Activated B cell treated with CpG ODN at 0.5 μM for 24 hours (primary cell): ENCODE measurements at regions of chr7 and their contacts with region 1.

Region 1: GRCh38 chr7:130982160-130982638 is 248.2 kb upstream of the KLF14 start:
- DNase-seq: no peak
- ATAC-seq: peak; percentile 94
- H3K4me3 Mint-ChIP-seq: no peak overlapping the region
- H3K27ac Mint-ChIP-seq: no peak overlapping the region
- H3K4me1 Mint-ChIP-seq: peaks cover 21% of the 10 kb centered on the region
- H3K27me3 Mint-ChIP-seq: no peaks in the 10 kb centered on the region
- CTCF ChIP-seq: no peak

Region 2: GRCh38 chr7:130912862-130913631 is 69.2 kb before region 1 on chr7:
- CTCF ChIA-PET with region 1: interaction called, 10 read pairs
- POLR2A ChIA-PET with region 1: interaction called, 3 read pairs
- intact Hi-C with region 1: loop called (anchors 2 kb)
- DNase-seq: peak; percentile 54
- ATAC-seq: peak; percentile 91
- H3K4me3 Mint-ChIP-seq: peak overlapping the region; percentile 87
- H3K27ac Mint-ChIP-seq: peak overlapping the region; percentile 90
- H3K4me1 Mint-ChIP-seq: peaks cover 86% of the 10 kb centered on the region
- H3K27me3 Mint-ChIP-seq: no peaks in the 10 kb centered on the region
- CTCF ChIP-seq: no peak

Region 3: GRCh38 chr7:130966246-130967009 is 15.8 kb before region 1 on chr7:
- CTCF ChIA-PET with region 1: interaction called, 20 read pairs
- POLR2A ChIA-PET with region 1: interaction called, 8 read pairs
- intact Hi-C with region 1: loop called (anchors 1 kb)
- DNase-seq: no peak
- ATAC-seq: no peak
- H3K4me3 Mint-ChIP-seq: no peak overlapping the region
- H3K27ac Mint-ChIP-seq: peak overlapping the region; percentile 74
- H3K4me1 Mint-ChIP-seq: peaks cover 65% of the 10 kb centered on the region
- H3K27me3 Mint-ChIP-seq: no peaks in the 10 kb centered on the region
- CTCF ChIP-seq: no peak

Region 4: DNA sequence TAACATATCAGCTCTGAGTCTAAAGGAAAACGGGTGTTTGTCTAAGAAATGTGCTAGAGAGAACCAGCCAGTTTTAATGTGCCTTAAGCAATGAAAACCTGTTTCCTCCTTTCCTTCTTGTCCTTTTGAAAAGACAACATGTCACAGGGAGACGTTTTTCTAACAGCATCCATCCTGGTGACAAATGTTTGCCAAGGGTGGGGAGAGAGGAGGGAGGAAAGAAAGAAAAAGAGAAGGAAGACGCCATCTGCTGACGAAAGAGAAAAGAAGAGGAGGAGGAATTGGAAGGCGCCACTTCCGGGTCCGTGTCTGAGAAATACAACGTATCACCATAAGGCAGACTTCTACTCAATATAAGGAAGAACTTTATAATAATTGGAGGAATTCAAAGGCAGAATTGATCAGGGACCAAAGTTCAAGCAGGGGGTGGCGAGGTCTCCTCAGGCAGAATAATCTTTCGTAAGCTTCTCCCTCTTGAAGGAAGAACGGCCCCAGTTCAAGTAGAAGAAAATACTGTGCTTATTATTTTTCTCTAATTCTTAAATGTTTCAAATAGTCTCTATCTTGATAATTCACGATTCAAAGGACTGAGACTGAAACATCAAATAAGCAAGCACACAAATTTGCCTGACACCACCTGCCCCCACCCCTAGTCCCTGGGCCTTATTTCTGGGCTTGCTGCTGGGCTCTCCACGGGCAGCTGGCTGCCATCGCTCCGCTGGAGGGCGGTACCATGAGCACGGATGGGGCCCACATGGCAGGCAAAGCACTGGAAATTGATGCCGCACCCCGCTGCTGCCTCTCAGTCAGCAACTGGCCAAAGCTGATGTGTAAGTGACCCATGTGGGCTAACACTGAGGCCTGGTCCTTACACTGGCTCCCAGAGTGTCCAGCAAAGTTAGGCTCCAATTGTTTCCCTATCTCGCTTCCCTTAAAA is 25.5 kb after region 1 on chr7:
- CTCF ChIA-PET with region 1: interaction called, 27 read pairs
- POLR2A ChIA-PET with region 1: interaction called, 10 read pairs
- intact Hi-C with region 1: loop called (anchors 1 kb)
- DNase-seq: no peak
- ATAC-seq: peak; percentile 64
- H3K4me3 Mint-ChIP-seq: peak overlapping the region; percentile 46
- H3K27ac Mint-ChIP-seq: peak overlapping the region; percentile 89
- H3K4me1 Mint-ChIP-seq: peaks cover 88% of the 10 kb centered on the region
- H3K27me3 Mint-ChIP-seq: no peaks in the 10 kb centered on the region
- CTCF ChIP-seq: no peak

Region 5: DNA sequence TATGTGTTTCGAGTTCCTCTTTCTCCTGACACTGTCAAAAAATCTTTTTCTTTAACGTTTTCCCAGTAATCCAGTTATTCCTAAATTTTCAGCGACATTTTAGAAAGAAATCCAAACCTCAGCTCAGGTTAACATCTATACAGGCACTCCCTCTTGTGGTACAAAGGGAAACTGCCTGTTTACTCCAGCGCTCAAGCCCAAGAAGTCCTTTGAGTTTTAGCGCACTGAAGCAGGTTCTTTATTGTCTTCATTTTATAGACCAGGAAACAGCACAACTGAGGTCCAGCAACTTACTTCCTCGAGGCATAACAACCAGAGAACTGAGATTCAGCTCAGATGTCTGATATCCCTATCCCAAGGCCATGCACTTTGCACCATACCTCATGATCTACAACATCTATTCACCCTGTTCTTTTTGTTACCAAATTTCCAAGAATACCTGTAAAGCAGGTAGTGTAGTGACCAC is 58.3 kb after region 1 on chr7:
- CTCF ChIA-PET with region 1: interaction called, 128 read pairs
- POLR2A ChIA-PET with region 1: interaction called, 11 read pairs
- intact Hi-C with region 1: loop called (anchors 1 kb)
- DNase-seq: no peak
- ATAC-seq: peak; percentile 75
- H3K4me3 Mint-ChIP-seq: peak overlapping the region; percentile 60
- H3K27ac Mint-ChIP-seq: peak overlapping the region; percentile 81
- H3K4me1 Mint-ChIP-seq: peaks cover 56% of the 10 kb centered on the region
- H3K27me3 Mint-ChIP-seq: no peaks in the 10 kb centered on the region
- CTCF ChIP-seq: peak; percentile 61

Region 6: DNA sequence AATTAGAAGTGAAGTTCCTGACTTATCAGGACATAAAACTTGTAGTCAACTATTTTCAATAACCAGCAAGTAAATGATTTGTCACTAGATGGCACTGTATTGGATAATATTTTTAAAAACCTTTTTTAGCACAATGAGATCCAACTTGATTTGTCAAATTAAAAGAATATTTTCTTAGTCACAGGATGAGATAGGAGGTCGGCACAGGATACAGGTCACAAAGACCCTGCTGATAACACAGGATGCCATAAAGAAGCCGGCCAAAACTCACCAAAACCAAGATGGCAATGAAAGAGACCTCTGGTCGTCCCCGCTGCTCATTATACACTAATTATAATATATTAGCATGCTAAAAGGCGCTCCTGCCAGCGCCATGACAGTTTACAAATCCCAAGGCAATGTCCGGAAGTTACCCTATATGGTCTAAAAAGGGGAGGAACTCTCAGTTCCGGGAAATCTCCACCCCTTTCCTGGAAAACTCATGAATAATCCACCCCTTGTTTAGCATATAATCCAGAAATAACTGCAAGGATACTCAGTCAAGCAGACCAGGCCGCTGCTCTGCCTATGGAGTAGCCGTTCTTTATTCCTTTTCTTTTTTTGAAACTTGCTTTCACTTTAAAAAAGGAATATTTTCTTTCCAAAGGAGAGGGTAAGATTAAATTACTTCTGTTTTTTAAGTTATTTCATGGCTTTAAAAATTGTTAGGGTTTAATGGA is 89.7 kb after region 1 on chr7:
- CTCF ChIA-PET with region 1: interaction called, 11 read pairs
- POLR2A ChIA-PET with region 1: no interaction called
- intact Hi-C with region 1: no loop called
- DNase-seq: no peak
- ATAC-seq: no peak
- H3K4me3 Mint-ChIP-seq: no peak overlapping the region
- H3K27ac Mint-ChIP-seq: peak overlapping the region; percentile 73
- H3K4me1 Mint-ChIP-seq: peaks cover 82% of the 10 kb centered on the region
- H3K27me3 Mint-ChIP-seq: no peaks in the 10 kb centered on the region
- CTCF ChIP-seq: no peak

Region 7: GRCh38 chr7:131107337-131108211 is 125.4 kb after region 1 on chr7:
- CTCF ChIA-PET with region 1: no interaction called
- POLR2A ChIA-PET with region 1: no interaction called
- intact Hi-C with region 1: no loop called
- DNase-seq: peak; percentile 69
- ATAC-seq: peak; percentile 45
- H3K4me3 Mint-ChIP-seq: peak overlapping the region; percentile 99
- H3K27ac Mint-ChIP-seq: peak overlapping the region; percentile 99
- H3K4me1 Mint-ChIP-seq: peaks cover 75% of the 10 kb centered on the region
- H3K27me3 Mint-ChIP-seq: no peaks in the 10 kb centered on the region
- CTCF ChIP-seq: no peak

Region 8: DNA sequence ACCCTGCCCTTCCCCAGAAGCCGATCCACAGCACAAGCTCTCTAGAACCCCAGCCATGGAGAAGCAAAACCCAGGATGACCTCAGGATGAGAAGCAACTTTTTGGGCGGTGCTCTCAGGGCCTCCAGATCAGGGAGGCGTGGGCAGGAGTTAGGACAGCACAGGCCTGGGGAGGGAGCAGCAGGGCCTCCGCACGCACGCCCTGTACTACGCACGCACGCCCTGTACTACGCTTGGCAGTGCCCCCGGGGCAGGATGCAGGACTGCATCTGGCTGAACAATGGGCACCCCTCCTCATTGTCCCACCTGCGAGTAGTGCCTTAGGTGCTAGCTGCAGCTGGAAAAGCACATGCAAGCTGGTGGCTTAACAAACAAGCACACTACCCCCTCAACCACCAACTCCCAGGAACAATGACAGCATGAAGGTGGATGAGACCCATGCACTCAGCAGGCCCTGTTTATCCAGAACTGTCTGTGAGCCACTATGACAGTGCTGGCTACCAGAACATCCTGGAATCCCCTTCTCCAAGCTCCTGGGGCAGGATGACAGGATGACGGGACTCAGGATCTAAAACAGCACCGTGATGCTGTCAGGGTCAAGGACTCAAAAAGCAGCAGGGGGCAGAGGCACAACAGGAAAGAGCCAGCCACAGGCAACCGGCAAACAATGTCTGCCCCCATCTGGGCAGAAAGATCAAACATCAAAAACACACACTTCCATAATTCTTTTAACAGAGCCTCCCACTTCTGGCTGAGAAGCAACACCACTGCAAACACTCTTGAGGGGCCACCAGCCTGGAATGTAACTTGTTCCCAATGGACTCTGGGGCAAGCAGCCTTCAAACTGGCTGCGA is 562.5 kb after region 1 on chr7:
- CTCF ChIA-PET with region 1: no interaction called
- POLR2A ChIA-PET with region 1: no interaction called
- intact Hi-C with region 1: no loop called
- DNase-seq: no peak
- ATAC-seq: no peak
- H3K4me3 Mint-ChIP-seq: no peak overlapping the region
- H3K27ac Mint-ChIP-seq: no peak overlapping the region
- H3K4me1 Mint-ChIP-seq: no peaks in the 10 kb centered on the region
- H3K27me3 Mint-ChIP-seq: no peaks in the 10 kb centered on the region
- CTCF ChIP-seq: no peak

Region 9: DNA sequence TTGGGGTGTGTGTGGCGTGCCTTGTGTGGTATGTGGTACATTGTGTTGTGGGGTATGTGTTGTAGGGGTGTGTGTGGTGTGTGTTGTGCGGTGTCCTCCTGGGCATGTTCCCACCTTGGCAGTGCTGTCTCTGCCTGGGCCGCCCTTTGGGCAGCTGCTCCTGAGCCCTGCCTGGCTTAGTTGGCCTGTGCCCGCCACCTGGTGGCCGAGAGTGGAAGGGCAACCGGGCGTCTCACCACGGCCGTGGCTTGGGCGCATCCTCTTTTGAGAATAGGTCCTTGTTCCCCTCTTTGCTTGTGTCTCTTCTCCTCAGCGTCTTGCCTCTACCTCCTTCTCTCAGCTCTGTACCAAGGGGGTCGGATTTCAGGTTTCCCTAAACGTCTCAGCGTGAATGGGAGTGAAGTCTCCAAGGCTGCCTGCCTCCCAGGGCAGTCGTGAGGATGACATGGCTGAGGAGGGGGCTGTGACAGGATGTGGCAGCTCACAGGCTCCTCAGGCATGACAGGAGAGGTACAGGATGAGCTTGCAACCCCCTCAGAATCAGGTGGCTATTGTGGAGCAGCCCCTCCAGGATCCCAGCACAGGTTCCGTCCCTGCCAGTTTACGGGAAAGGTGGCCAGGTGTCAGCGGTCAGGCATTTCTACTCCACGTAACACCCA is 672.6 kb after region 1 on chr7:
- CTCF ChIA-PET with region 1: no interaction called
- POLR2A ChIA-PET with region 1: no interaction called
- intact Hi-C with region 1: loop called (anchors 10 kb)
- DNase-seq: peak; percentile 81
- ATAC-seq: peak; percentile 89
- H3K4me3 Mint-ChIP-seq: no peak overlapping the region
- H3K27ac Mint-ChIP-seq: no peak overlapping the region
- H3K4me1 Mint-ChIP-seq: no peaks in the 10 kb centered on the region
- H3K27me3 Mint-ChIP-seq: no peaks in the 10 kb centered on the region
- CTCF ChIP-seq: peak; percentile 74